AG04450 (cell line): ENCODE measurements at regions of chr2 and their contacts with region 1.

Region 1: DNA sequence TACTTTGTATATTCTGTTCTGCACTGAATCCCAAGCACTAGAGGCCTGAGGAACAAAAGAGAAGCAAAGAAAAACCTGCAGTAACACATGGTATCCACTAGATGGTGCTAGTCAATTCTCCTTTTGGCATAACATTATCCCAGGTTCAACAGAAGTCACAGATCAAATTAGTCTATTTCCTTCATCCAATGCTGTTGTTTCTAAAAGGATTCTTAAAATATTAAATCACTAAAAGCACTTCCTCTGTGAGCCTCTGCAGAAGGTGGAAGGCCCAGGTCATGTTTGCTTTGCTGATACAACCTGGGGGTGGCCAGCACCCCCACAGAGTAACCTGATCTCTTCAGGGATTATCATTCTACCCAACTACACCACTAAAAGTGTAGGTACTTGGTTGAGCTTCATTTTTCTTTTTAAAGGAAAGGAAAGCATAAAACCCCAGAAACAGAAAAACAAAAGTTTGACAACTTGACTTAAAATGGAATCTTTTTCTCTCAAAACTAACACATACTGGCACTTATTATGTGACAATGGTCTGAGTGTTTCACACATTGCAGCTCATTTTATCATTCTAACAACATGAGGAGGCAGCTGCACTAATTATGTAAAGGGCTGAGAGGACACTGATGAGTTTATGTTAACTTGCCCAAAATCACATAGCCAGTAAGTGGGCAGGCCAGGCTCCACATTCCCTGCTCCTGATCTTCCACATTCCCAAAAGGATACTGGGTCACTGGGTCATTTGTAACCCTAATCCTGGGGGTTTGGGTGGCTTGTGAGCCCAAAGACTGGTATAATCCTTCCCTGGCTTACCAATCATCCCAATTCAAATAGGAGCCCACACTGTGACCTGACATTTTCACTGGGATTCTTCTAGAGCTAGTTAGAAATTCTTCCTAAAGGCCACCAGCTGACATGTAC is 66.8 kb upstream of the DNER start:
- DNase-seq: peak; percentile 21
- H3K4me3 ChIP-seq: no peak overlapping the region
- H3K27ac ChIP-seq: no peak overlapping the region
- H3K27me3 ChIP-seq: no peaks in the 10 kb centered on the region
- CTCF ChIP-seq: peak; percentile 92

Region 2: DNA sequence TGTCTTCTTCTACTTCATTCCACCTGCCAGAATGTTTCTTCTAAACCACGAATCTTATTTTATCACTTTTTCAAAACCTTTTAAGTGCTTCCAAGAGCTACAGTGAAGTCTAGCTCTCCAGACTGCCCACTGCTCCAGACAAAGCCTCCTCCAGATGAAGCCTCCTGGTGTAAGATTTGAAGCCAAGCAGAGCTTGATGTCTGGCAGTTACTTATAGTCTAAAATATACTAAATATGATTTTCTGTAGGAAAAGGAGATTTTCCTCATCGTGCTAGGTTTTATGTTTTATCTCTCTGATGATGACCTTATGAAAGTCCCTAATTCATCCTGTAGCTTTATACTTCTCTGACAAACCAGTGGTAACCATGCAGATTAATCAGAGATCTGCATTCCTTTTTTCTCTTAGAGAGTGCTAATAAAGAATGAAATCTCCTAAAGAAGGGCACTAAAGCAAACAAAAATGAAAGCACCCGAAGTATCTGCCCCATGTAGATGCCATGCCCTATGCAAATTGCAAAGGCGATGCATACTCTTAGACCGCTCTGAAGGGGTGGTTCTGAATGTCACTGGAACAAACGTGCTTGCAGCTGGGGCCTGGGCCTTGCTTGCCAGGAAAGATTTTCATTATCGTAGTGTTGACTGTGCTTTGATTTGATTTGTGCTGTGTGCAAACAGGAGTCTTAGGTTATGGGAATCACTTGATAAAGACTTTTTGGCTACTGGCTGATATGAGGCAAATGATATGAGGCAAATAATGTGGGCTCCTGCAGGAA is 824.2 kb before region 1 on chr2:
- CTCF ChIA-PET with region 1: no interaction called
- POLR2A ChIA-PET with region 1: no interaction called
- DNase-seq: no peak
- H3K4me3 ChIP-seq: no peak overlapping the region
- H3K27ac ChIP-seq: no peak overlapping the region
- H3K27me3 ChIP-seq: no peaks in the 10 kb centered on the region
- CTCF ChIP-seq: no peak

Region 3: DNA sequence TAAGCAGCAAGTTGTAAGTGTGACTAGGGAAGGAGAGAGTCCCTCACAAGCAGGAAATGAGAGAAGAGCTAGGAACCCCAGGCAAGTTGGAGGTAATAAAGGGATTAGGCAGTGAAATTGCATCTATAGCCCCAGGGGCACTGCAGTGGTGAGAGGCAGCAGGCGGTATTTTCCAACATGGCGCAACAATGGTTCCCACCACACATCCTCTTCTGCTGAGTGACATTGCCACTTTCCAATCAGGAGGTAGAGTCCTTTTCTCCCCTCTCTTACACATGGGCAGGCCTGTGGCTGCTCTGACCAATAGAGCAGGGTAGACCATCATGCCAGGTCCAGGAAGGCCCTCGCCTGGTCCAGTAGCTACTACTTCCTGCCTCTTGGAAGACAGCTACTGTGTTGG is 153.4 kb before region 1 on chr2:
- CTCF ChIA-PET with region 1: no interaction called
- POLR2A ChIA-PET with region 1: no interaction called
- DNase-seq: no peak
- H3K4me3 ChIP-seq: no peak overlapping the region
- H3K27ac ChIP-seq: no peak overlapping the region
- H3K27me3 ChIP-seq: no peaks in the 10 kb centered on the region
- CTCF ChIP-seq: no peak

Region 4: GRCh38 chr2:229768235-229768634 is 12.9 kb before region 1 on chr2:
- CTCF ChIA-PET with region 1: interaction called, 31 read pairs
- POLR2A ChIA-PET with region 1: no interaction called
- DNase-seq: no peak
- H3K4me3 ChIP-seq: no peak overlapping the region
- H3K27ac ChIP-seq: no peak overlapping the region
- H3K27me3 ChIP-seq: no peaks in the 10 kb centered on the region
- CTCF ChIP-seq: no peak

Region 5: GRCh38 chr2:229815858-229816257 is 34.7 kb after region 1 on chr2:
- CTCF ChIA-PET with region 1: interaction called, 14 read pairs
- POLR2A ChIA-PET with region 1: no interaction called
- DNase-seq: no peak
- H3K4me3 ChIP-seq: no peak overlapping the region
- H3K27ac ChIP-seq: no peak overlapping the region
- H3K27me3 ChIP-seq: no peaks in the 10 kb centered on the region
- CTCF ChIP-seq: no peak

Region 6: DNA sequence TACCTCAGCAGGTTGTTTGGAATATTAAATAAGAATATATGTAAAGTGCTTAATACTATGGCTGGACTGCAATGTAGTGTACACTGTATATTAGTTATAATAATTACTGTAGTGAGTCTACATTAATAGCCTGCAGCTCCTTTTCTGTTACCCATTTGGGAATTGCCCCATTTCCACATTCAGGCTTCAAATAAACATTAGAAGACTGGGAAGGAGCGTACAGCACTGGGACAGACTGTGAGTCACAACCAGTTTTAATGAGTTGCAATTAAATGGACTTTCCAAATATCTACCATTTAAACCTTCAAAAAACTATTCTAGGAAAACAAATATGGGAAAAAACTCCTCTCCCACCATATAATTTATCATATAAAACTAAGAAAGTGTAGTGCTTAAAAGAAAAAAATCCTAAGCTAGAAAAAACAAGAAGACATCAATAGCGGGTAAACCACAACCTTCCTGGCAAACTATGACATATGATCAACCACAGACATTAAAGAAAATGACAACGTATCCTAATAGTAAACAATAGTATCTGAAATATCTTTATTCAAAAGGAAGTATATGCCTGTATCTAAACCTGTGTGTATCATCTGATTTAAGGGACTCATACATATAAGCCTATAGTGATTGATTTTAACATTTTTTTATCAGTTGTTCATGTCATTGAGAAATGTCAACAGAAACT is 54.6 kb after region 1 on chr2:
- CTCF ChIA-PET with region 1: interaction called, 12 read pairs
- POLR2A ChIA-PET with region 1: no interaction called
- DNase-seq: no peak
- H3K4me3 ChIP-seq: no peak overlapping the region
- H3K27ac ChIP-seq: no peak overlapping the region
- H3K27me3 ChIP-seq: no peaks in the 10 kb centered on the region
- CTCF ChIP-seq: no peak

Region 7: GRCh38 chr2:229910832-229911412 is 129.8 kb after region 1 on chr2:
- CTCF ChIA-PET with region 1: interaction called, 10 read pairs
- POLR2A ChIA-PET with region 1: no interaction called
- DNase-seq: no peak
- H3K4me3 ChIP-seq: no peak overlapping the region
- H3K27ac ChIP-seq: no peak overlapping the region
- H3K27me3 ChIP-seq: no peaks in the 10 kb centered on the region
- CTCF ChIP-seq: 0 out of 2 replicates have a peak, but pooled peaks have one; percentile 32